Naive thymus-derived CD4-positive, alpha-beta T cell (primary cell): ENCODE measurements at regions of chr2 and their contacts with region 1.

Region 1: GRCh38 chr2:32010670-32011484 is at the start of gene MEMO1:
- DNase-seq: peak; percentile 82 to 96 (median 94)
- ATAC-seq: peak; percentile 88
- H3K4me3 ChIP-seq: peak within 1 kb of the TSS; percentile 76
- H3K4me3 Mint-ChIP-seq: peak within 1 kb of the TSS; percentile 77 to 95 (median 92)
- H3K27ac ChIP-seq: peak within 1 kb of the TSS; percentile 80
- H3K27ac Mint-ChIP-seq: peak within 1 kb of the TSS; percentile 86 to 96 (median 93)
- H3K4me1 ChIP-seq: peaks cover 28% of the 10 kb centered on the region in 2 donors
- H3K4me1 Mint-ChIP-seq: peaks cover 26 to 55% (median 43%) of the 10 kb centered on the region in 7 donors
- H3K27me3 ChIP-seq: no peaks in the 10 kb centered on the region
- H3K27me3 Mint-ChIP-seq: peaks cover 0 to 3% (median 0%) of the 10 kb centered on the region in 5 donors
- total RNA-seq, gene MEMO1: 44.5 to 49.2 (median 47.9) TPM

Region 2: DNA sequence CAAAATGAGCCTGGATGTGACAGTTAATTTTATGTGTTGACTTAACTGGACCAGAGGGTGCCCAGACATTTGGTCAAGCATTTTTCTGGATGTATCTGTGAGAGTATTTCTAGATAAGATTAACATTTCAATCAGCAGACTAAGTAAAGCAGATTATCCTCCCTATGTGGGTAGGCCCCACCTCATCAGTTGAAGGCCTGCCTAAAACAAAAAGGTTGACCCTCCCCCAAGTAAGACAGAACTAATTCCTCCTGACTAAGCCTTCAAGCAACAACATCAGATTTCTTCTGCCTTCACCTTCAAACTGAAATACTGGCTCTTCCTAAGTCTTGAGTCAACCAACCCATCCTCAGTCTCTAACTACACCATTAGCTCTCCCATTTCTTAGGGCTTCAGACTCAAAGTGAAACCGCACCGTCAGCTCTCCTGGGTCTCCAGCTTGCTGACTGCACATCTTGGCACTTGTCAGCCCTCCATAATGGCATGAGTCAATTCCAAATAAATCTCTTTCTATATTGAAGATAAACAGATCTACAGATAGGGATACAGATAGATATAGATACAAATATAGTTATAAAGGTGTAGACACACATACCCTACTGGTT is 48.0 kb before region 1 on chr2:
- CTCF ChIA-PET with region 1: no interaction called
- POLR2A ChIA-PET with region 1: interaction called, 3 read pairs
- intact Hi-C with region 1: loop called in 1 of 2 experiments (anchors 2 kb)
- DNase-seq: peak in 1 of 9 donors; percentile 24
- ATAC-seq: no peak
- H3K4me3 ChIP-seq: no peak overlapping the region
- H3K4me3 Mint-ChIP-seq: peak overlapping the region in 4 of 10 donors; percentile 15 to 48 (median 24)
- H3K27ac ChIP-seq: no peak overlapping the region
- H3K27ac Mint-ChIP-seq: peak overlapping the region in 6 of 9 donors; percentile 1 to 69 (median 3)
- H3K4me1 ChIP-seq: peaks cover 8 to 11% of the 10 kb centered on the region in 2 donors
- H3K4me1 Mint-ChIP-seq: peaks cover 36 to 56% (median 49%) of the 10 kb centered on the region in 7 donors
- H3K27me3 ChIP-seq: no peaks in the 10 kb centered on the region
- H3K27me3 Mint-ChIP-seq: no peaks in the 10 kb centered on the region

Region 3: DNA sequence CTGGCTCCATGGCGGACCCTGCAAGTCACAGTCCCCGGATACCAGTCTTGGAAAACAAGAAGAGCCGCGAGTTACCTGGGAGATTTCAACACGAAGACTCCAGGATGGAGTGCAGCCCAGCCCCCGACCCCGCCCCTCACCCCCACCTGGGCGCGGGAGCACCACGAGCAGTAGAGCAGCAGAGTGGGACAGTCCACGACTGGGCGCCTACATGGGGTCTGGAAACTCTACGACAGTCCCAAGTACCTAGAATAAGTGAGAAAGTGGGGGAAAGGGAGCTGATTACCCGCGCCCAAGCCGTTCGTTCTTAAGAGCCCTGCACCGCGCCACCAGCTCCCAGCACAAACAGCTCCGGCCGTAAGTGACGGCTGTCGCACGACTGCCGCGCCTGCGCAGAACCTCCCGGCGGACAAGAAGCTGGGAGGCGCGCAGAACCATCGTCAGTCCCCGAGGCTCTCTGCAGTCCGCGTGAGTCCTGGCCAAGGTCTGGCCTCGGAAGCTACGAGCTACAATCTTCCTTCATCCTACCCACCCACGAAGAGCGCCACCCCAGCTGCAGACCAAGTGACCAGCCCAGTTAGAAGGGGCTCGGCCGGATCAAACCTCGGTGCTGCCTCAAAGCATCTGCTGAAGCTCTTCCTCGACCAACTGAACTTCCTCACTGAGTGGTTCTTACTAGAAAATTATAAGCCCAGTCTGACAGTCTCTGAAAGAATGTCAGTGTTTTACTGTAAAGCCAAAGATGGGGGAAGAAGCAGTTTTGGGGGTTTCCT is 28.8 kb after region 1 on chr2 and contains the start of gene DPY30:
- CTCF ChIA-PET with region 1: no interaction called
- POLR2A ChIA-PET with region 1: interaction called, 14 read pairs
- intact Hi-C with region 1: loop called (anchors 1 kb)
- DNase-seq: peak; percentile 86 to 94 (median 90)
- ATAC-seq: peak; percentile 98
- H3K4me3 ChIP-seq: peak within 1 kb of the TSS; percentile 64
- H3K4me3 Mint-ChIP-seq: peak within 1 kb of the TSS; percentile 88 to 98 (median 93)
- H3K27ac ChIP-seq: peak within 1 kb of the TSS; percentile 78
- H3K27ac Mint-ChIP-seq: peak within 1 kb of the TSS; percentile 91 to 99 (median 96)
- H3K4me1 ChIP-seq: peaks cover 5 to 6% of the 10 kb centered on the region in 2 donors
- H3K4me1 Mint-ChIP-seq: peaks cover 0 to 32% (median 24%) of the 10 kb centered on the region in 7 donors
- H3K27me3 ChIP-seq: no peaks in the 10 kb centered on the region
- H3K27me3 Mint-ChIP-seq: no peaks in the 10 kb centered on the region
- total RNA-seq, gene DPY30: 21.4 to 61.9 (median 45.6) TPM

Region 4: GRCh38 chr2:32135409-32135808 is 124.5 kb after region 1 on chr2:
- CTCF ChIA-PET with region 1: no interaction called
- POLR2A ChIA-PET with region 1: no interaction called
- intact Hi-C with region 1: loop called in 1 of 2 experiments (anchors 5 kb)
- DNase-seq: peak in 5 of 9 donors; percentile 4 to 31 (median 17)
- ATAC-seq: no peak
- H3K4me3 ChIP-seq: no peak overlapping the region
- H3K4me3 Mint-ChIP-seq: no peak overlapping the region
- H3K27ac ChIP-seq: no peak overlapping the region
- H3K27ac Mint-ChIP-seq: no peak overlapping the region
- H3K4me1 ChIP-seq: no peaks in the 10 kb centered on the region
- H3K4me1 Mint-ChIP-seq: peaks cover 0 to 4% (median 0%) of the 10 kb centered on the region in 7 donors
- H3K27me3 ChIP-seq: no peaks in the 10 kb centered on the region
- H3K27me3 Mint-ChIP-seq: no peaks in the 10 kb centered on the region

Region 5: DNA sequence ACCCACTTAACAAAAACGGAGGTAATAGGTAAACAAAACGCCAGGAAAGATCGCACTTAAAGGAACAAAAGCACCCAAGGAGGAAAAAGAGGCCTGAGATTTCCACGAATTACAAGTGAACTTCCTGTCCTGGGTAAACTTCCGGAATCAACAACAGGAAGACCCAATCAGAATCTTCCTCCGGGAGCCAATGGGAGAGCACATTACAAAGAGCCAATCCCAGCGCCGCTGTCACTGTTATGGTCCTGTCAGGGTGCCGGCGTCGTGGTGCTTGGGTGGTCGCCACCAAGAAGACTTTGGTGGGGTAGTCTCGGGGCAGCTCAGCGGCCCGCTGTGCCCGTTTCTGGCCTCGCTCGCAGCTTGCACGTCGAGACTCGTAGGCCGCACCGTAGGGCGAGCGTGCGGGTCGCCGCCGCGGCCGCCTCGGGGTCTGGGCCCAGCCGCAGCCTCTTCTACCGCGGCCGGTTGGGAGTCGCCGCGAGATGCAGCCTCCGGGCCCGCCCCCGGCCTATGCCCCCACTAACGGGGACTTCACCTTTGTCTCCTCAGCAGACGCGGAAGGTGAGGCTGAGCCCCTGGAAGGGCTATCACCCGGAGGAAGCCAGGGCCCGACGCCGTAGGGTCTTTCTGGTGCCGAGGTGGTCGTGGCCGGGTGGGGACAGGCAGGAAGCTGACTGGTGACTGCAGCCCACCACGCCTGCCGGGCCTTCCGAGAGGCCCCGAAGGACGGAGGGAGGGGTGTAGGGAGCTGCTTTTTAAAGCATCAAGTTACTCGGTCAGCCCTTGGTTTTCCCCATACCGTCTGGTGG is 267.0 kb after region 1 on chr2 and contains the start of gene YIPF4:
- CTCF ChIA-PET with region 1: no interaction called
- POLR2A ChIA-PET with region 1: interaction called, 3 read pairs
- intact Hi-C with region 1: loop called (anchors 1 kb)
- DNase-seq: peak; percentile 84 to 92 (median 88)
- ATAC-seq: peak; percentile 99
- H3K4me3 ChIP-seq: peak within 1 kb of the TSS; percentile 67
- H3K4me3 Mint-ChIP-seq: peak within 1 kb of the TSS; percentile 82 to 100 (median 94)
- H3K27ac ChIP-seq: peak within 1 kb of the TSS; percentile 84
- H3K27ac Mint-ChIP-seq: peak within 1 kb of the TSS; percentile 91 to 100 (median 98)
- H3K4me1 ChIP-seq: peaks cover under 1 to 6% of the 10 kb centered on the region in 2 donors
- H3K4me1 Mint-ChIP-seq: peaks cover 10 to 46% (median 33%) of the 10 kb centered on the region in 7 donors
- H3K27me3 ChIP-seq: no peaks in the 10 kb centered on the region
- H3K27me3 Mint-ChIP-seq: peaks cover 0 to 6% (median 0%) of the 10 kb centered on the region in 5 donors
- total RNA-seq, gene YIPF4: 21.0 to 43.5 (median 30.5) TPM

Region 6: GRCh38 chr2:32627814-32628579 is 617.1 kb after region 1 on chr2 and contains the start of gene TTC27:
- CTCF ChIA-PET with region 1: no interaction called
- POLR2A ChIA-PET with region 1: no interaction called
- intact Hi-C with region 1: loop called in 1 of 2 experiments (anchors 2 kb)
- DNase-seq: peak; percentile 93 to 96 (median 95)
- ATAC-seq: peak; percentile 100
- H3K4me3 ChIP-seq: peak within 1 kb of the TSS; percentile 89
- H3K4me3 Mint-ChIP-seq: peak within 1 kb of the TSS; percentile 85 to 97 (median 95)
- H3K27ac ChIP-seq: peak within 1 kb of the TSS; percentile 82
- H3K27ac Mint-ChIP-seq: peak within 1 kb of the TSS; percentile 82 to 98 (median 89)
- H3K4me1 ChIP-seq: no peaks in the 10 kb centered on the region
- H3K4me1 Mint-ChIP-seq: peaks cover 10 to 44% (median 31%) of the 10 kb centered on the region in 7 donors
- H3K27me3 ChIP-seq: no peaks in the 10 kb centered on the region
- H3K27me3 Mint-ChIP-seq: no peaks in the 10 kb centered on the region
- total RNA-seq, gene TTC27: 18.5 to 27.5 (median 23.3) TPM

Region 7: GRCh38 chr2:33599175-33599942 is 1588.5 kb after region 1 on chr2 and contains the start of gene FAM98A:
- CTCF ChIA-PET with region 1: no interaction called
- POLR2A ChIA-PET with region 1: no interaction called
- intact Hi-C with region 1: loop called in 1 of 2 experiments (anchors 2 kb)
- DNase-seq: peak; percentile 96 to 98 (median 98)
- ATAC-seq: peak; percentile 96
- H3K4me3 ChIP-seq: peak within 1 kb of the TSS; percentile 92
- H3K4me3 Mint-ChIP-seq: peak within 1 kb of the TSS; percentile 91 to 99 (median 96)
- H3K27ac ChIP-seq: peak within 1 kb of the TSS; percentile 89
- H3K27ac Mint-ChIP-seq: peak within 1 kb of the TSS; percentile 86 to 97 (median 96)
- H3K4me1 ChIP-seq: peaks cover 10 to 14% of the 10 kb centered on the region in 2 donors
- H3K4me1 Mint-ChIP-seq: peaks cover 17 to 45% (median 33%) of the 10 kb centered on the region in 7 donors
- H3K27me3 ChIP-seq: no peaks in the 10 kb centered on the region
- H3K27me3 Mint-ChIP-seq: peaks cover 0 to 4% (median 0%) of the 10 kb centered on the region in 5 donors
- total RNA-seq, gene FAM98A: 16.8 to 36.0 (median 32.6) TPM